ENCODE measurements at regions of chr15 and their contacts with region 1.

Region 1: DNA sequence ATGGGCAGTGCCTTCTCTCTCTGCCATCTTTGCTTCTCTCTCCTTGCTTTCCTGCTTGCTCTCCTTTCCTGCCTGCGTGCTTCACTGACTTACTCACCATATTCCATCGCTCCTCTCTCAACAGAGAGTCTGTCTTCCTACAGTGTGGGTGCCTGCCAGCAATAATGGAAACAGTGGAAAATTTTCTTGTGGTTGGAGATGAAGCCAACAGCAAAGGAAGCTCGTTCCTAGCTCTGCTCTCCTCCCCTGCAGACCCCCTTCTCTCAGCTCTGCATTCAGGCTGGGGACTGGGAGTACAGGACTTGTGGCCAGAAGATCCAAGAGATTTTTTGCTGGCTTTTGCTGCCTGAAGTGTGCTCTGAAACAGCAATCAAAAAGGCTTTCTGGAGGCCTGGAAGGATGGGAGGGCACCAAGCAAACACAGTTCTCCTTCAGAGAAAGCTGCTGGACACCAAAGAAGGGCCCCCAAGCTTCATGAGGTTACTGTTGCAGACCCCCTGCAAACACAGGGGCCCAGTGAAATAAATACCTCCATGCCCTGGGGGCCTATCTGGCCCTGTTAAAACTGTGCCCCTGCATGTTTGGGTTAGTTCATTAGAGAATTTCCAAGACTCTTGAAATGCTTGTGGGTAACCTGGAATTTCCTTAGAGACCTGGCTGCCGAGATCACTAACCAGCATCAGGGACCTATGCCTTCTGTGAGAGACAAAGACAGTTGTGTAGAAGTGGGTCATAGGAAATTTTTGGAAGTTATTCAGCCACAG is 149.9 kb upstream of the RASGRP1 start:
- DNase-seq: peak; percentile 94
- H3K4me3 ChIP-seq: no peak overlapping the region
- H3K27ac ChIP-seq: peak overlapping the region; percentile 95
- H3K4me1 ChIP-seq: peaks cover 27% of the 10 kb centered on the region
- H3K27me3 ChIP-seq: no peaks in the 10 kb centered on the region
- CTCF ChIP-seq: no peak

Region 2: GRCh38 chr15:38651328-38652038 is 63.0 kb before region 1 on chr15:
- CTCF ChIA-PET with region 1: no interaction called
- dilution Hi-C with region 1: no loop called
- in situ Hi-C with region 1: no loop called
- intact Hi-C with region 1: no loop called
- DNase-seq: peak; percentile 38
- H3K4me3 ChIP-seq: no peak overlapping the region
- H3K27ac ChIP-seq: no peak overlapping the region
- H3K4me1 ChIP-seq: peaks cover 28% of the 10 kb centered on the region
- H3K27me3 ChIP-seq: no peaks in the 10 kb centered on the region
- CTCF ChIP-seq: no peak

Region 3: DNA sequence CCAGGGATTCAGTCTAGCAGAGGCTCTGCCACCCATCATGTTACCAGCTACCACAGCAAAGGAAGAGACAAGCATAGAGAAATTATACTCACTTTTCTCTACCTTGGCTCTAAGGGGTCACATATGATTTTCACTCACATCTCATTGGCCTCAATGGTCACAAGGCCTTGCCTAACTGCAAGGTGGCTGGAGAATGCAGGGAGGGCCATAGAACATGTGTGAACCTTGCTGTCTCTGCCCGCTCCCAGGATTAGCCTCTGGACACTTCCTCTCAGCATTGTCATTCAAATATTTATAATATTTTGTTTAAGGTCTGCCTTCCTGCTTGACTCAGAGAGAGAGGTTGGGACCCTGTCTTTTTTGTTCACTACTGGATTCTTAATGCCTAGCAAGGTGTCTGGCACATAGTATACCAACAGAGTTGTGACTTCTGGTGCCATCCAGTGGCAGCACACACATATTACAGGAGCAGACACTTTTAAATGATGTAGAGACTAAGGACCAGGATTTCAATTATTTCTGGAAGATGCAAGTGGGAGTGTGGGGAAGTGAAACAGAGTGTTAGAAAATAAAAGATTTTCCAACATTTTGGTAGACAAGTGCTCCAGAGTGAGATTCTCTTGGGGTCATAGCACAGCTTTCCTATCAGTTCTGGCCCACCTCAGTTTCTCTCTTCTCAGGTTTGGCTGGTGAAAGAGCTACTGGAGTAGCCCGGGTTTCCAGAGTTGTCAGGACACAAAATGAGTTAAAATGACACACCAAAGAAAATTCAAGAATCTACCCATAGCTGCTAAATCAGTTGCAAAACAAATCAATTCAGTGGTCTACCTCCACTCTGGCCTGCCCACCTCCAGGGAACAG is 30.9 kb before region 1 on chr15:
- CTCF ChIA-PET with region 1: no interaction called
- dilution Hi-C with region 1: no loop called
- in situ Hi-C with region 1: no loop called
- intact Hi-C with region 1: no loop called
- DNase-seq: peak; percentile 32
- H3K4me3 ChIP-seq: no peak overlapping the region
- H3K27ac ChIP-seq: no peak overlapping the region
- H3K4me1 ChIP-seq: peaks cover 4% of the 10 kb centered on the region
- H3K27me3 ChIP-seq: no peaks in the 10 kb centered on the region
- CTCF ChIP-seq: peak; percentile 86 to 89

Region 4: GRCh38 chr15:38745126-38745525 is 30.6 kb after region 1 on chr15:
- CTCF ChIA-PET with region 1: no interaction called
- dilution Hi-C with region 1: loop called (anchors 5 kb)
- in situ Hi-C with region 1: no loop called
- intact Hi-C with region 1: no loop called
- DNase-seq: no peak
- H3K4me3 ChIP-seq: no peak overlapping the region
- H3K27ac ChIP-seq: no peak overlapping the region
- H3K4me1 ChIP-seq: peaks cover 16% of the 10 kb centered on the region
- H3K27me3 ChIP-seq: no peaks in the 10 kb centered on the region
- CTCF ChIP-seq: no peak

Region 5: GRCh38 chr15:39125904-39126303 is 411.4 kb after region 1 on chr15:
- CTCF ChIA-PET with region 1: no interaction called
- dilution Hi-C with region 1: no loop called
- in situ Hi-C with region 1: no loop called
- intact Hi-C with region 1: loop called (anchors 5 kb)
- DNase-seq: no peak
- H3K4me3 ChIP-seq: no peak overlapping the region
- H3K27ac ChIP-seq: no peak overlapping the region
- H3K4me1 ChIP-seq: peaks cover 60% of the 10 kb centered on the region
- H3K27me3 ChIP-seq: no peaks in the 10 kb centered on the region
- CTCF ChIP-seq: peak; percentile 63 to 77

Measured in mammary epithelial cell (primary cell).